ENCODE measurements at regions of chr4 and their contacts with region 1.

Region 1: DNA sequence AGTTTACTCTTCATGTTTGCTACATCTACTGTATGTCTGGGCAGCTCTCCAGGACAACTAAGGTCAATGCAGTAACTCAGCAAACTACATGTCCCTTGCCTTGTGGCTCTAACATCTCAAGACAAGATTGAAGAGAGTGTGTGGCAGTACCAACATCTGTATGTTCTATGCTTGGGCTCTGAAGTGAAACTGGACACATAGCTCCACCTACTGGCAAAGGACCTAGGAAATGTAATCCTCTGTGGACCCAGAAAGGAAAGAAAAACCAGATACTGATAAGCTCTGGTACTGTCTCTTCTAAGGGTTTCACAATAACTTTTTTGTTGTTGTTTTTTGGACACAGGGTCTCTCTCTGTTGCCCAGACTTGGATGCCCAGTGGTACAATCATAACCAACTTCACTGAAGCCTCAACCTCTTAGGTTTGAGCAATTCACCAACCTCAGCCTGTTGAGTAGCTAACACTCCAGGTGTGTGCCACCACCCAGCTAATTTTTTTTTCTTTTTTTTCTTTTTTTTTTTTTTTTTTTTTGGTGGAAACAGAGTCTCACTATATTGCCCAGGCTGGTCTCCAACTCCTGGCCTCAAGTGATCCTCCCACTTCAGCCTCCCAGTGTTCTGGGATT is 64.1 kb downstream of the QDPR start:
- DNase-seq: peak; percentile 84
- H3K4me3 Mint-ChIP-seq: no peak overlapping the region
- H3K27ac Mint-ChIP-seq: no peak overlapping the region
- H3K4me1 Mint-ChIP-seq: peaks cover 17% of the 10 kb centered on the region
- H3K27me3 Mint-ChIP-seq: no peaks in the 10 kb centered on the region
- CTCF ChIP-seq: peak; percentile 70

Region 2: DNA sequence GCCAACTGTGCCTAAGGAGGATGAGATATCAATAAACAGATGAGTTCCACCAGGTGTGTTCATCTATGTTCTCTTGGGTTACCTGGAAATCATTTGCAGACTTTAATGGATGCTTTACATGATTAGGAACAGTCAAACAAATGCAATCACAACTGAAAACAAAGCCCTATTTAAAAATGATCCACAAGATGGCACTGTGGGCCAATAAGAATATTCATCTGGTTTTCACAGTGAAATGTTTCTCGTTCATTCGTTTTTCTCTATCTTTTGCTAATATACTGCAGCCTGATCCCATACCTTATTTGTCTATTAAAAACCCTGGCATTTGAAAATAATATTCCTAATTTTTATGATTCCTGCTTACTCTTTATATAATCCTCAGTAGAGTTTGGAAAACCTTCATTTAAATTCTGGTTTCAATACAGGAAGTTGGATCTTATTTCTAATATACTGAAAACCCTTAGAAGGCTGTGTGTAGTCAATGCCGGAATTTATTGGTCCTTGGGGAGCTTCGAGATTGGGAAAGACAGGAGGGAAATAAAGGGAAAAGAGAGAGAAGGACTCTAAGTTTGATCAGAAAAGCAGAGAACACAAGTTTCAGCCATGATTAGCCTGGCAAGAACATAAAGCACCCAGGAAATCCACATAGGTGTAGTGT is 1157.8 kb before region 1 on chr4:
- CTCF ChIA-PET with region 1: interaction called, 16 read pairs
- POLR2A ChIA-PET with region 1: no interaction called
- intact Hi-C with region 1: loop called (anchors 1 kb)
- DNase-seq: peak; percentile 54
- H3K4me3 Mint-ChIP-seq: no peak overlapping the region
- H3K27ac Mint-ChIP-seq: no peak overlapping the region
- H3K4me1 Mint-ChIP-seq: peaks cover 6% of the 10 kb centered on the region
- H3K27me3 Mint-ChIP-seq: peaks cover 23% of the 10 kb centered on the region
- CTCF ChIP-seq: peak; percentile 53

Region 3: DNA sequence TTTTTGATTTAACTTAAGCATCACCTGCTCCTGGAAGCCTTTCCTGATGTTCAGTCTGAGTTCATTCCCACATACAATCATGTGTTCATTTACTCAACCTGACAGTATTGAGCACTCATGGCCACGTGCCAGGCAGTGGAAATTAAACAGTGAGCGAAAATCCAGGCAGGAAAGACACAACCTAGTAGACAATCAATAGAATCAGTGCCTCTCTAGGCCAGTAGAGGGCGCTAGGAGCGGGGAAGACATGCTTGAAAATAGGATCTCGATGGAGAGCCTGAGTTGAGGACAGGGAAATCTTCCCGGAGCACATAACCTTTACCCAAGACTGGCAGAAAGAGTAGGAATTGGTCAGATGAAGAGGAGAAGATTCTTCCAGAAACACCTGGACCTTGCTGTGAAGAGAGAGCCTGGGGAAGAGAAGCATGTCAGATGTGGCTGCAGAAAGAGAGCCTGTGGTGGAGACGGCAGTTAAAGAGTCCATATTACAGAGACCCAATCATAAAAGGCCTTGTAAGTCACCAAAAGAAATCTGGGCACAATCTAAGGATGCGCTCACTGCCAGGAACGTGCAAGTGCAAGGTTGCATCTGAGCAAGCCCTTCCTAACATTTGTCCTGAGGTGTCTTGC is 652.9 kb before region 1 on chr4:
- CTCF ChIA-PET with region 1: interaction called, 3 read pairs
- POLR2A ChIA-PET with region 1: no interaction called
- intact Hi-C with region 1: loop called (anchors 1 kb)
- DNase-seq: peak; percentile 64
- H3K4me3 Mint-ChIP-seq: no peak overlapping the region
- H3K27ac Mint-ChIP-seq: no peak overlapping the region
- H3K4me1 Mint-ChIP-seq: no peaks in the 10 kb centered on the region
- H3K27me3 Mint-ChIP-seq: peaks cover 23% of the 10 kb centered on the region
- CTCF ChIP-seq: peak; percentile 75

Region 4: DNA sequence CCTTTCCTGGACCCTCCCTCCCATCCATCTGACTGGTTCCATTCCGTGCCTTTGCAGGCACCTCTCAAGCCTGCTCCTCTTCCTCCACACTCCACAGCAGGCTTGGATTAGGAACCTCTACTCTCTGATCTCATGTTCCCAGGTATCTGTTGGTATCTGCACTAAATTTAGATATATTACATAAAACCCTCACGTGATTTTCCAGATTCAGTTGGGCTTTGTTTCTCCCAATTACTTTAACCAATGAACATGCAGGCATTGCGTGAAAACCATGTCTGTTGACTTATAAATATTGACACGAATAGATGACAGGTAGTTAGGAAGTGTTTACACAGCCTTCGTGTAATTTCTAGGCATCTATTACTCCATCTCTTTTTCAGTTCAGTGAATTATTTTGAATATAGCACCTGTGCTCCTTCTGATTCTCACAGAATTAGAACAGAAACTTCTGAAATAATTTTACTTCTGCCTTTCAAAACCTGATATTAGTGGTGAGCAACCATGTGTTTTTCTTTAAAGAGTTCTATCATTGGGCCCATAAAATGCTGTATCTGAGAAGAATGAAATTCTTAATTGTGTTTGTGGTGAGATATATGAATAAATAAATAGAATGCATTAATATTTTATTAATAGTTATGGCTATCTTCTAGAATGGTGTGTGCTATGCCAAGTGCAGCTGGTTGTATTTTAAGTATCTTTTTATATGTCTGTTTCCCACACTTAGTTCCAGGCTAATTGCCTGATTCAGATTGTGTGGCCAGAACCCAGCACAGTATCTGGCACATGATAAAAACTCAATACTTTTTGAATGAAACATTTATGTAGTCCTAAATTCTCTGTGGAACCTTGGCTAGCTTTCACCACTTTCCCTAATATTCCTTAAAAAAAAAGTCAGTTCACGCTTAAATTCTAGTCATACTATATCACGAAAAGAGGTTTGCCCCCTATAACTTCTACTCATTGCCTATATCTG is 240.7 kb before region 1 on chr4:
- CTCF ChIA-PET with region 1: no interaction called
- POLR2A ChIA-PET with region 1: no interaction called
- intact Hi-C with region 1: no loop called
- DNase-seq: no peak
- H3K4me3 Mint-ChIP-seq: no peak overlapping the region
- H3K27ac Mint-ChIP-seq: no peak overlapping the region
- H3K4me1 Mint-ChIP-seq: no peaks in the 10 kb centered on the region
- H3K27me3 Mint-ChIP-seq: peaks cover 20% of the 10 kb centered on the region
- CTCF ChIP-seq: no peak

Region 5: DNA sequence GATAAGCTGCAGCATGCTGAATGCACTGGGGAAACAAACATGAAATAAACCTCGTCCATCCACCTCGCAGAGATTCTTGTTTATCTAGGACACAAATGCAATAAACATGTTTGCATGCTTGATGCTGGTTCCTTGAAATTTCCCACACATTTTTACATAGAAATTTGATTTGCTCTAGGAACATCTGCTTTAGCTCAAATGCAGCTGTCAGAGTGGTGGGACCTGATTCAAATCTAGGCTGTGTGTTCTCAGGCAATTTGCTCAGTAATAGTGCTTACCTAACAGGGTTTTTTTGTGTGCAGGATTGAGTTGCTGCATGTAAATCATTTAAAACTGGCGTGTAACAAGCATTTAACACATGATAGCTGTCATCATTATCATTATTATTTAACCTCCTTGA is 229.0 kb before region 1 on chr4:
- CTCF ChIA-PET with region 1: no interaction called
- POLR2A ChIA-PET with region 1: no interaction called
- intact Hi-C with region 1: no loop called
- DNase-seq: no peak
- H3K4me3 Mint-ChIP-seq: no peak overlapping the region
- H3K27ac Mint-ChIP-seq: no peak overlapping the region
- H3K4me1 Mint-ChIP-seq: no peaks in the 10 kb centered on the region
- H3K27me3 Mint-ChIP-seq: no peaks in the 10 kb centered on the region
- CTCF ChIP-seq: no peak

Region 6: GRCh38 chr4:17332478-17332877 is 115.3 kb before region 1 on chr4:
- CTCF ChIA-PET with region 1: interaction called, 7 read pairs
- POLR2A ChIA-PET with region 1: no interaction called
- intact Hi-C with region 1: loop called (anchors 5 kb)
- DNase-seq: no peak
- H3K4me3 Mint-ChIP-seq: no peak overlapping the region
- H3K27ac Mint-ChIP-seq: no peak overlapping the region
- H3K4me1 Mint-ChIP-seq: peaks cover 15% of the 10 kb centered on the region
- H3K27me3 Mint-ChIP-seq: peaks cover 11% of the 10 kb centered on the region
- CTCF ChIP-seq: no peak

Region 7: GRCh38 chr4:17356926-17357325 is 90.9 kb before region 1 on chr4:
- CTCF ChIA-PET with region 1: interaction called, 21 read pairs
- POLR2A ChIA-PET with region 1: interaction called, 5 read pairs
- intact Hi-C with region 1: no loop called
- DNase-seq: no peak
- H3K4me3 Mint-ChIP-seq: no peak overlapping the region
- H3K27ac Mint-ChIP-seq: no peak overlapping the region
- H3K4me1 Mint-ChIP-seq: no peaks in the 10 kb centered on the region
- H3K27me3 Mint-ChIP-seq: peaks cover 44% of the 10 kb centered on the region
- CTCF ChIP-seq: no peak

Region 8: GRCh38 chr4:17468371-17469221 is 20.8 kb after region 1 on chr4:
- CTCF ChIA-PET with region 1: interaction called, 81 read pairs
- POLR2A ChIA-PET with region 1: no interaction called
- intact Hi-C with region 1: no loop called
- DNase-seq: peak; percentile 56
- H3K4me3 Mint-ChIP-seq: no peak overlapping the region
- H3K27ac Mint-ChIP-seq: no peak overlapping the region
- H3K4me1 Mint-ChIP-seq: no peaks in the 10 kb centered on the region
- H3K27me3 Mint-ChIP-seq: no peaks in the 10 kb centered on the region
- CTCF ChIP-seq: peak; percentile 50